Posterior cingulate gyrus (tissue), 11 donors: ENCODE measurements at regions of chr16 and their contacts with region 1.

Region 1: DNA sequence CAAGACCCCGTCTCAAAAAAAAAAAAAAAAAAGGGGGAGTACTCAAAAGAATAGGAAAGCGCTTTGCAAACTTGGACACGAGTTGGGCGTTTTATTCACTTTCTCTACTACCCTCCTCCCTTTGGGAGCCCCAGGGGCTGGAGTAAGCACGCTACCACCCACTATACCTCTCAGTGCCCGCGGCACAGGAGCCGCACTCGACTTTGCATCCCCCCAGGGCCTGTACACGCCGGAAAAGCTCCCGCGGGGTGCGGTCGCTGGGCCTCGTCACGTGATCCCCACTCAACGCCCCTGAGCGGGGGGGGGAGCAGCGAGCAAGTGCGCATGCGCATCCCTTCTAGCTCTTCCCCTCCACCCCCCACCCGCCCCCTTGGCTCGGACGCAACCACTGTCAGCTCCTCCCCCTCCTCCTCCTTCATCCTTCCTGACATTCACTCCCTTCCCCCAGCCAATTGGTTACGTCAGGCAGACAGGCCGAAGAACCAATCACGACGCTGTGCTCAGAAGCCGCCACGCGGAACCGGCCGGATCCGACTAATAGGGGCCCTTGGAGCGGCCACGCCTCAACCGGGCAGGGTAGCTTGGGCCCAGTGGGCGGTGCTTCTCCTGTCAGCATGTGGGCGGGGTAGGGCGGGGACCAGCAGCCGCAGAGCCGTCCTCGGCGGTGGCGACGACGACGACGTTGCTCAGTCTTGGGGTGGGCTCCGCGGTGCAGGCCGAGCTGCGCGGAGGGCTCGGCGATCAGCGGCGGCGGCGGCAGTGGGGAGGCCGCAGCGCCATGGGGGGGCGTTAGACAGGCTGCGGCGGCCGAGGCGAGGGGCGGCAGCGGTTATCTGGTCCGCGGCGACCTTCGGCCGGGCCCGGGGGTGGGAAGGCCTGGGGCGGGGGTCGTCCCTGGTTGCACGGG is at the start of gene HAPSTR1:
- DNase-seq: peak; percentile 97 to 100 (median 100)

Region 2: GRCh38 chr16:8868416-8869211 is 222.6 kb before region 1 on chr16 and contains the start of gene CARHSP1:
- intact Hi-C with region 1: loop called (anchors 1 kb)
- DNase-seq: peak; percentile 62 to 97 (median 72)

Region 3: DNA sequence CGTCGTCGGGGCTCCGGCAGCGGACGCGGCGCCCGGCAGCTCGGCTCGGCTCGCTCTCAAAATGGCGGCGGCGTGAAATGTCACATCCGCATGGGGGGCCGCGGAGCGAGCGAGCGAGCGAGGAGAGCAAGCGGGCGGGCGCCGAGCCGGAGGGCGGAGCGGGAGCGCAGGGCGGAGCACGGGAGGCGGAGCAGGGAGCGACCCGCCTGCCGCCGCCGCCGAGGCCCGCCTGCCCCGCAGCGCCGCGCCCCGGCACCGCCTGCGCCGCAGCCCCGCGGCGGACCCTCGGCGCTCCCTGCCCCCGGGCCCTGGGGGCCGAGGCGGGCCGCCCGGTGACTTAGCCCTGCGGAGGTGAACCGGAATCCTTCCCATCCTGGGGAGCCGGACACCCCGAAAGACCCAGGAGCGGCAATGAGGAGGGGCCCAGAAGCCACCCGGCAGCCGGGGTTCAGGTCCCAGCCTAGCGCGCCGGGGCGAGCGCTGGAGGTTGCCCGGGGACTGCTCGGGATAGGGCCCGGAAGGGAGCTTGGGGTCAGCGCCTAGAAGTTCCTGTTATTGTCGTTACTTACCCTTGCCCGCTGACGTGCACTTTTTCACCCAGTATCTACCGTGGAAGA is 127.3 kb before region 1 on chr16 and contains the start of gene USP7:
- intact Hi-C with region 1: loop called (anchors 2 kb)
- DNase-seq: peak; percentile 81 to 98 (median 86)

Region 4: GRCh38 chr16:9170470-9170869 is 79.3 kb after region 1 on chr16:
- intact Hi-C with region 1: no loop called
- DNase-seq: no peak

Region 5: GRCh38 chr16:9372934-9373890 is 282.0 kb after region 1 on chr16:
- intact Hi-C with region 1: no loop called
- DNase-seq: peak in 9 of 10 donors; percentile 18 to 95 (median 65)